ENCODE measurements at regions of chr5 and their contacts with region 1.

Region 1: GRCh38 chr5:42514754-42515153 is 91.5 kb downstream of the GHR start:
- DNase-seq: peak; percentile 39 to 62 (median 55)
- H3K4me3 ChIP-seq: no peak overlapping the region
- H3K27ac ChIP-seq: no peak overlapping the region
- H3K4me1 ChIP-seq: no peaks in the 10 kb centered on the region
- H3K27me3 ChIP-seq: peaks cover 0 to 2% (median 0%) of the 10 kb centered on the region in 5 experiments

Region 2: GRCh38 chr5:41547991-41548390 is 966.8 kb before region 1 on chr5:
- CTCF ChIA-PET with region 1: no interaction called
- POLR2A ChIA-PET with region 1: no interaction called
- DNase-seq: no peak
- H3K4me3 ChIP-seq: no peak overlapping the region
- H3K27ac ChIP-seq: no peak overlapping the region
- H3K4me1 ChIP-seq: no peaks in the 10 kb centered on the region
- H3K27me3 ChIP-seq: no peaks in the 10 kb centered on the region

Region 3: GRCh38 chr5:42366051-42366450 is 148.7 kb before region 1 on chr5:
- CTCF ChIA-PET with region 1: no interaction called
- POLR2A ChIA-PET with region 1: no interaction called
- DNase-seq: no peak
- H3K4me3 ChIP-seq: no peak overlapping the region
- H3K27ac ChIP-seq: no peak overlapping the region
- H3K4me1 ChIP-seq: no peaks in the 10 kb centered on the region
- H3K27me3 ChIP-seq: no peaks in the 10 kb centered on the region

Region 4: DNA sequence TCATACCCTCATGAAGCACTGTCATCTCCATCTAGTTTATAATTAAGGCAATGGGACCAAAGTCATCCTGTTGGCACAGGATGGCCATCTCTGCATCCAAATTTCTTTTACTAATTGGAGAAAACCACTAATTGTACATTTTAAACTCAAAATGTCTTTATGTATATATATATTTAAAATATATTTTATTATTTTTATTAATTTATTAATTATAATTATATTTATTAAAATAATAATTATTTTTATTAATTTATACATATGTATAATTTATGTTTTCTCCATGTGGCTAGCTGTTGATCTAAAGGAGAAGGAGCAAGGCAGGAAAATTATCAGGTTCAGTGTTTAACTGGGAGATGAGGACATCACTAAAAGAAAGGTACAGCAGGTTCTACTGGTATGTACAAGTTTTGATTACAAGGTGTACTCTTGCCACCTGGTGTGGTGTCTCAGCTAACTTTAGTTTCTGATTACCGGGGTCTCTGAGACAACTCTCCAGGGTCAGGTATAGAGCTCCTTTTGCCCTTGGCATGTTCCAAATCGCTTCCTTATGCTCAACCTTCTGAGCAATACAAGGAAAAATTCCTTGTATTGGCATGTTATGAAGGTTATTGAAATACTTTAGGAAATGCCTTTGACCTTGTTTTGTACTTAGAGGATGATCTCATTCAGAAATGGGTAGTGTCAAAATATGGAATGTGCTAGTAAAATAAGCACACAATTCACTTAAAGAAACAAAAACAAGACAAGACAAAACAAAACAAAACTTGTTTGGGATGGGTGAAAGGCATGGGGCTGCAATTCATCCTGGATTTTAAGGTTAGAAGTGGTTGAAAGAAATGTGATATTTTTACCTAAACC is 11.9 kb before region 1 on chr5:
- CTCF ChIA-PET with region 1: no interaction called
- POLR2A ChIA-PET with region 1: no interaction called
- DNase-seq: no peak
- H3K4me3 ChIP-seq: no peak overlapping the region
- H3K27ac ChIP-seq: no peak overlapping the region
- H3K4me1 ChIP-seq: no peaks in the 10 kb centered on the region
- H3K27me3 ChIP-seq: no peaks in the 10 kb centered on the region

Region 5: DNA sequence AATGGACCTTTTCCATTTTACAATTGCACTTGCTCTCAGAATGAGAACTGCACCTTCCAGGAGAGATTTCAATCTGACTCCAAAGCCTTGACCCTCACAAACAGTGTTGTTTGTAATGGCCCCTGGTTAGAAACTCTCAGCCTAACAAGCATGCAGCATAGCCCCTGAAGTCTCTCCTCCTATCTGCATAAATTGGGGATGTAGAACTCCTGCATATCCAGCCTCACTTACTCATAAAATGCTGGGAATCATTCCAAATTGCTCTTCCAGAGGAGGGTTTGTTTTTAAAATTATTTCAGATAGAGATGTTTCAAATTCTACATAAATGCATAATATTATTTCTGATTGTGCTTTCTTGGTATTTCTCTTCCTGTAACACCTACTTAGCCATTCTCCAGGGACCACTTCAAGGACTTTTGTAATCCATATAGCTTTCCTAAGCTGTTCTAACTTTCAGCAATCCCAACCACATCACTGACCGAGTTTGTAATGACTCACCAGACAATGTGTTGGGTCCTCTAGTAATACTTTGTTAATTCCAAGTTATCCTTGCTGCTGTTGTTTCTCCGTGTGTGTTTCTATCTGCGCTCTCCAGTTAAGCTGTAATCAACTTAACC is 98.1 kb after region 1 on chr5:
- CTCF ChIA-PET with region 1: no interaction called
- POLR2A ChIA-PET with region 1: no interaction called
- DNase-seq: no peak
- H3K4me3 ChIP-seq: no peak overlapping the region
- H3K27ac ChIP-seq: no peak overlapping the region
- H3K4me1 ChIP-seq: no peaks in the 10 kb centered on the region
- H3K27me3 ChIP-seq: no peaks in the 10 kb centered on the region

Region 6: GRCh38 chr5:42656651-42657015 is 141.9 kb after region 1 on chr5:
- CTCF ChIA-PET with region 1: interaction called, 30 read pairs
- POLR2A ChIA-PET with region 1: no interaction called
- DNase-seq: peak; percentile 20 to 55 (median 43)
- H3K4me3 ChIP-seq: peak overlapping the region in 1 of 7 experiments; percentile 48
- H3K27ac ChIP-seq: no peak overlapping the region
- H3K4me1 ChIP-seq: no peaks in the 10 kb centered on the region
- H3K27me3 ChIP-seq: peaks cover 0 to 2% (median 0%) of the 10 kb centered on the region in 5 experiments

Region 7: GRCh38 chr5:42889311-42889933 is 374.7 kb after region 1 on chr5:
- CTCF ChIA-PET with region 1: interaction called, 26 read pairs
- POLR2A ChIA-PET with region 1: interaction called, 3 read pairs
- DNase-seq: peak; percentile 82 to 92 (median 89)
- H3K4me3 ChIP-seq: no peak overlapping the region
- H3K27ac ChIP-seq: no peak overlapping the region
- H3K4me1 ChIP-seq: peaks cover 0 to 2% (median 0%) of the 10 kb centered on the region in 4 experiments
- H3K27me3 ChIP-seq: no peaks in the 10 kb centered on the region